Naive thymus-derived CD4-positive, alpha-beta T cell (primary cell): ENCODE measurements at regions of chr2 and their contacts with region 1.

Region 1: DNA sequence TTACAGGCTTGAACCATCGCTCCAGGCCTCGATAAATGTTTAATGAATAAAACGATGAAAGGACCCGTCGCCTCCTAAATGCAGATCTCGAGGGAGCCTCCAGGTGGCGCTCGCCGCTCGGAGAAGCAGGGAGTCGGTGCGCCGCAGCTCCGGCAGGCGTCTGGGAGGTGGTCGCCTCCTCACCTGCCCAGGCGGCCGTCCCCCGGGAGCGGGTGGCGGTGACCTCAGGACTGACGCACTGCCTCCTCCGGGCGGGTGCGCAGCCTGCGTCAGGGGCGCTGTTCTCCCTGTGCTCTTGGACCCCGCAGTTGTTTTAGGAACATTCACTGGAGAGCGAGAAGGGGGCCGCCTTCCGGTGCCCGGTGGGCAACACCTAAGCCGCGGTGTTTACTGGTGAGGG is 38.6 kb upstream of the POLE4 start:
- DNase-seq: peak; percentile 37 to 79 (median 73)
- ATAC-seq: peak; percentile 77
- H3K4me3 ChIP-seq: no peak overlapping the region
- H3K4me3 Mint-ChIP-seq: peak overlapping the region in 6 of 10 donors; percentile 21 to 77 (median 52)
- H3K27ac ChIP-seq: no peak overlapping the region
- H3K27ac Mint-ChIP-seq: peak overlapping the region in 1 of 9 donors; percentile 55
- H3K4me1 ChIP-seq: peaks cover 0 to 9% of the 10 kb centered on the region in 2 donors
- H3K4me1 Mint-ChIP-seq: peaks cover 0 to 17% (median 10%) of the 10 kb centered on the region in 7 donors
- H3K27me3 ChIP-seq: no peaks in the 10 kb centered on the region
- H3K27me3 Mint-ChIP-seq: peaks cover 5 to 27% (median 17%) of the 10 kb centered on the region in 5 donors

Region 2: GRCh38 chr2:74845217-74846011 is 74.4 kb before region 1 on chr2:
- CTCF ChIA-PET with region 1: no interaction called
- POLR2A ChIA-PET with region 1: no interaction called
- intact Hi-C with region 1: no loop called
- DNase-seq: peak in 2 of 9 donors; percentile 23 to 51
- ATAC-seq: peak; percentile 70
- H3K4me3 ChIP-seq: peak overlapping the region; percentile 29
- H3K4me3 Mint-ChIP-seq: peak overlapping the region; percentile 65 to 87 (median 78)
- H3K27ac ChIP-seq: peak overlapping the region; percentile 39
- H3K27ac Mint-ChIP-seq: peak overlapping the region; percentile 85 to 99 (median 94)
- H3K4me1 ChIP-seq: peaks cover 37 to 97% of the 10 kb centered on the region in 2 donors
- H3K4me1 Mint-ChIP-seq: peaks cover 75 to 100% (median 97%) of the 10 kb centered on the region in 7 donors
- H3K27me3 ChIP-seq: no peaks in the 10 kb centered on the region
- H3K27me3 Mint-ChIP-seq: no peaks in the 10 kb centered on the region

Region 3: DNA sequence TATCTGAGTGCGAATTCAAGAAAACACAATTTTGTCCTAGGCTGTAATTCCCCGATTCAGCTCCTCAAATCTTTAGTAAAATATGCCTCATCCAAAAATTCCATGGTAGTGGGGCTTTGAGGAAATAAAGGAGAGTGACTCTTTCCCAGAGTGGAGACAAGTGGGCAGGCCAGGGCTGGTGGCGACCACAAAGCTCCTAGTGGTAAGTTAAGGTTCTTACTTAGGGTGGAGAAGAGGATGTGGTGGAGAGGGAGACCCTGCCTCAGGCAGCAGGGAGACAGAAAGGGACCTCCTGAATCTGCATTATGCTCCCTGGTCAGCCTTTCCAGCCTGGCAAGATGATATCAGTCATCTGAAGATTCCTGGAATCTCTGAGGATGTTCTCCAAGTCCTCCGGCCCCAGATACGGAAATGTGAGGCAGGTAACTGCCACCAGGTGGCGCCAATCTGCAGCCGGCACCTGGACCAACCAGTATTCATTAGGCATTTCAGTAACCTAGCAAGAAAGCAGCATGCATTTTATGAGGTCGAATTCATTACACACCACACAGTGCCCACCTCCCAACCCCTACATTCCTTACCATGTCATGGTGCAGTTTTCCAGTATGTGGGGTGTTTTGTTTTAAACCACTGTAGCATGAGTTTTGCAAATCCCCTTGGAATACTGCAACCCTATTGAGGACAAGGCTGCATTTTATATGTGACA is 145.0 kb after region 1 on chr2:
- CTCF ChIA-PET with region 1: interaction called, 6 read pairs
- POLR2A ChIA-PET with region 1: no interaction called
- intact Hi-C with region 1: loop called in 1 of 2 experiments (anchors 1 kb)
- DNase-seq: peak in 8 of 9 donors; percentile 12 to 45 (median 30)
- ATAC-seq: no peak
- H3K4me3 ChIP-seq: no peak overlapping the region
- H3K4me3 Mint-ChIP-seq: no peak overlapping the region
- H3K27ac ChIP-seq: no peak overlapping the region
- H3K27ac Mint-ChIP-seq: no peak overlapping the region
- H3K4me1 ChIP-seq: no peaks in the 10 kb centered on the region
- H3K4me1 Mint-ChIP-seq: peaks cover 0 to 16% (median 0%) of the 10 kb centered on the region in 7 donors
- H3K27me3 ChIP-seq: no peaks in the 10 kb centered on the region
- H3K27me3 Mint-ChIP-seq: no peaks in the 10 kb centered on the region

Region 4: GRCh38 chr2:75113231-75113869 is 193.5 kb after region 1 on chr2:
- CTCF ChIA-PET with region 1: no interaction called
- POLR2A ChIA-PET with region 1: no interaction called
- intact Hi-C with region 1: no loop called
- DNase-seq: no peak
- ATAC-seq: no peak
- H3K4me3 ChIP-seq: no peak overlapping the region
- H3K4me3 Mint-ChIP-seq: no peak overlapping the region
- H3K27ac ChIP-seq: no peak overlapping the region
- H3K27ac Mint-ChIP-seq: no peak overlapping the region
- H3K4me1 ChIP-seq: no peaks in the 10 kb centered on the region
- H3K4me1 Mint-ChIP-seq: no peaks in the 10 kb centered on the region
- H3K27me3 ChIP-seq: no peaks in the 10 kb centered on the region
- H3K27me3 Mint-ChIP-seq: peaks cover 0 to 10% (median 0%) of the 10 kb centered on the region in 5 donors

Region 5: GRCh38 chr2:75186821-75187220 is 267.0 kb after region 1 on chr2:
- CTCF ChIA-PET with region 1: no interaction called
- POLR2A ChIA-PET with region 1: no interaction called
- intact Hi-C with region 1: no loop called
- DNase-seq: no peak
- ATAC-seq: no peak
- H3K4me3 ChIP-seq: no peak overlapping the region
- H3K4me3 Mint-ChIP-seq: no peak overlapping the region
- H3K27ac ChIP-seq: no peak overlapping the region
- H3K27ac Mint-ChIP-seq: no peak overlapping the region
- H3K4me1 ChIP-seq: no peaks in the 10 kb centered on the region
- H3K4me1 Mint-ChIP-seq: peaks cover 0 to 1% (median 0%) of the 10 kb centered on the region in 7 donors
- H3K27me3 ChIP-seq: peaks cover 0 to 3% of the 10 kb centered on the region in 2 donors
- H3K27me3 Mint-ChIP-seq: peaks cover 2 to 20% (median 8%) of the 10 kb centered on the region in 5 donors

Region 6: GRCh38 chr2:75241696-75242095 is 321.9 kb after region 1 on chr2:
- CTCF ChIA-PET with region 1: no interaction called
- POLR2A ChIA-PET with region 1: no interaction called
- intact Hi-C with region 1: loop called in 1 of 2 experiments (anchors 2 kb)
- DNase-seq: no peak
- ATAC-seq: no peak
- H3K4me3 ChIP-seq: no peak overlapping the region
- H3K4me3 Mint-ChIP-seq: no peak overlapping the region
- H3K27ac ChIP-seq: no peak overlapping the region
- H3K27ac Mint-ChIP-seq: no peak overlapping the region
- H3K4me1 ChIP-seq: no peaks in the 10 kb centered on the region
- H3K4me1 Mint-ChIP-seq: no peaks in the 10 kb centered on the region
- H3K27me3 ChIP-seq: no peaks in the 10 kb centered on the region
- H3K27me3 Mint-ChIP-seq: peaks cover 0 to 8% (median 0%) of the 10 kb centered on the region in 5 donors

Region 7: DNA sequence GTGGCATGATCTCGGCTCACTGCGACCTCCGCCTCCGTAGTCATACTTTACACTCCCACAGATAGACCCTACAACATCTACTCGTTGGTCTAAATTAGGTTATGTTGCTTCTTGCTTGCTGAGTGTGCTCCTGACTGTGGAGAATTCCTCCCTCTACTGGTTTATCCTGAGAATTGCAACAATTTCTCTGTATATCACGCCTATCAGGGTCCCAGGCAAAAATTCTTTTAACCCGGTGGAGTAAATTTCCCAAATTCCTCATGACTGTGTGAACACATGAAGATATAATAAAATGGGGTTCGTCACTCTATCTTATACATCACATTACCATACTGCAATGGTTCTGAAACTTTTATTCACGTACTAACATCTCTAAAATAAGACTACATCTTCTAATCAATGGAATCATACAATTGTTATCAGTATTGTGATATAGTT is 484.2 kb after region 1 on chr2:
- CTCF ChIA-PET with region 1: interaction called, 14 read pairs
- POLR2A ChIA-PET with region 1: no interaction called
- intact Hi-C with region 1: loop called (anchors 1 kb)
- DNase-seq: peak in 6 of 9 donors; percentile 11 to 53 (median 49)
- ATAC-seq: peak; percentile 75
- H3K4me3 ChIP-seq: no peak overlapping the region
- H3K4me3 Mint-ChIP-seq: no peak overlapping the region
- H3K27ac ChIP-seq: no peak overlapping the region
- H3K27ac Mint-ChIP-seq: no peak overlapping the region
- H3K4me1 ChIP-seq: no peaks in the 10 kb centered on the region
- H3K4me1 Mint-ChIP-seq: peaks cover 0 to 46% (median 6%) of the 10 kb centered on the region in 7 donors
- H3K27me3 ChIP-seq: peaks cover 0 to 6% of the 10 kb centered on the region in 2 donors
- H3K27me3 Mint-ChIP-seq: peaks cover 0 to 9% (median 4%) of the 10 kb centered on the region in 5 donors

Region 8: GRCh38 chr2:75466708-75467311 is 547.0 kb after region 1 on chr2:
- CTCF ChIA-PET with region 1: no interaction called
- POLR2A ChIA-PET with region 1: no interaction called
- intact Hi-C with region 1: loop called in 1 of 2 experiments (anchors 1 kb)
- DNase-seq: peak in 3 of 9 donors; percentile 1 to 7 (median 4)
- ATAC-seq: no peak
- H3K4me3 ChIP-seq: no peak overlapping the region
- H3K4me3 Mint-ChIP-seq: no peak overlapping the region
- H3K27ac ChIP-seq: no peak overlapping the region
- H3K27ac Mint-ChIP-seq: no peak overlapping the region
- H3K4me1 ChIP-seq: no peaks in the 10 kb centered on the region
- H3K4me1 Mint-ChIP-seq: no peaks in the 10 kb centered on the region
- H3K27me3 ChIP-seq: no peaks in the 10 kb centered on the region
- H3K27me3 Mint-ChIP-seq: peaks cover 12 to 37% (median 22%) of the 10 kb centered on the region in 5 donors

Region 9: DNA sequence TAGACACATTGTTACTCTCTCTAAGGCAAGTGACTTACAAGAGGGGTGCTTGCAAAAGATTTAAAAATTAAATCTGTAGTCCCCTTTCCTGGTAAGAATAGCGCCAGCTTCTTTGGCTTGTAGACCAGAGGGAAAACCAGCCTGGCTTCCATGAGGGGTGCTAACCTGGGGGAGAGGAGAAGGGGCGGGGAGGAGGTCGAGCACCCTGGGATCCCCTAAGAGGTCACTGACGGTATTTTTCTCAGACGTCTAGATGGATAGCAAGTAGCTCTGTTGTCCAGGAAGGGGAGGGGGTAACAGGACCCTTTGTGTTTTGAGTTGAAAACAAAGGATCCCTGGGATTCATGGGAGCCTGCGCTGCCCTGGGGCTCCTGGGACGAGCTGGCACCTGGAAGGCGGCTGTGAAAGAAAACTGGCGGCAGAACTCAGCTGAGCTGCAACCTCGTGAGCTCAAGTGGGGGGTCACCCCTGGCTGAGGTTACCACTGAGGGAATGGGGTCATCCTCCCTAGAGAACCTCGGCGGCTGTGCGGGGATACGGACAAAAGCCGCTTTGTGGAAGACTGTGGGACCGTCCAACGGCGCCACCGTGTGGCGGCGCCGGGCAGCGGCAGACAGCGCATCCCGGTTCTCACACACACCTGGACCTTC is 689.0 kb after region 1 on chr2:
- CTCF ChIA-PET with region 1: no interaction called
- POLR2A ChIA-PET with region 1: no interaction called
- intact Hi-C with region 1: loop called (anchors 1 kb)
- DNase-seq: peak; percentile 21 to 57 (median 49)
- ATAC-seq: peak; percentile 84
- H3K4me3 ChIP-seq: no peak overlapping the region
- H3K4me3 Mint-ChIP-seq: peak overlapping the region in 4 of 10 donors; percentile 28 to 45 (median 38)
- H3K27ac ChIP-seq: no peak overlapping the region
- H3K27ac Mint-ChIP-seq: no peak overlapping the region
- H3K4me1 ChIP-seq: no peaks in the 10 kb centered on the region
- H3K4me1 Mint-ChIP-seq: peaks cover 0 to 1% (median 0%) of the 10 kb centered on the region in 7 donors
- H3K27me3 ChIP-seq: peaks cover 0 to 4% of the 10 kb centered on the region in 2 donors
- H3K27me3 Mint-ChIP-seq: peaks cover 46 to 74% (median 65%) of the 10 kb centered on the region in 5 donors

Region 10: GRCh38 chr2:75627895-75628504 is 708.2 kb after region 1 on chr2:
- CTCF ChIA-PET with region 1: interaction called, 5 read pairs
- POLR2A ChIA-PET with region 1: no interaction called
- intact Hi-C with region 1: loop called (anchors 1 to 5 kb)
- DNase-seq: peak in 7 of 9 donors; percentile 20 to 50 (median 38)
- ATAC-seq: peak; percentile 79
- H3K4me3 ChIP-seq: no peak overlapping the region
- H3K4me3 Mint-ChIP-seq: no peak overlapping the region
- H3K27ac ChIP-seq: no peak overlapping the region
- H3K27ac Mint-ChIP-seq: no peak overlapping the region
- H3K4me1 ChIP-seq: no peaks in the 10 kb centered on the region
- H3K4me1 Mint-ChIP-seq: no peaks in the 10 kb centered on the region
- H3K27me3 ChIP-seq: no peaks in the 10 kb centered on the region
- H3K27me3 Mint-ChIP-seq: peaks cover 16 to 38% (median 29%) of the 10 kb centered on the region in 5 donors